Activated CD4-positive, alpha-beta T cell treated with anti-CD3 and anti-CD28 coated beads for 36 hours (primary cell): ENCODE measurements at regions of chr13 and their contacts with region 1.

Region 1: GRCh38 chr13:33931397-33932311 is 113.7 kb downstream of the RFC3 start:
- DNase-seq: no peak
- ATAC-seq: no peak
- H3K4me3 Mint-ChIP-seq: no peak overlapping the region
- H3K27ac Mint-ChIP-seq: no peak overlapping the region
- H3K4me1 Mint-ChIP-seq: no peaks in the 10 kb centered on the region
- H3K27me3 Mint-ChIP-seq: no peaks in the 10 kb centered on the region

Region 2: GRCh38 chr13:33409673-33410510 is 521.8 kb before region 1 on chr13:
- CTCF ChIA-PET with region 1: no interaction called
- POLR2A ChIA-PET with region 1: no interaction called
- intact Hi-C with region 1: no loop called
- DNase-seq: no peak
- ATAC-seq: no peak
- H3K4me3 Mint-ChIP-seq: no peak overlapping the region
- H3K27ac Mint-ChIP-seq: no peak overlapping the region
- H3K4me1 Mint-ChIP-seq: no peaks in the 10 kb centered on the region
- H3K27me3 Mint-ChIP-seq: peaks cover 20% of the 10 kb centered on the region

Region 3: GRCh38 chr13:34361560-34361959 is 429.9 kb after region 1 on chr13:
- CTCF ChIA-PET with region 1: no interaction called
- POLR2A ChIA-PET with region 1: no interaction called
- intact Hi-C with region 1: loop called in 1 of 2 experiments (anchors 10 kb)
- DNase-seq: no peak
- ATAC-seq: no peak
- H3K4me3 Mint-ChIP-seq: no peak overlapping the region
- H3K27ac Mint-ChIP-seq: no peak overlapping the region
- H3K4me1 Mint-ChIP-seq: no peaks in the 10 kb centered on the region
- H3K27me3 Mint-ChIP-seq: no peaks in the 10 kb centered on the region

Region 4: DNA sequence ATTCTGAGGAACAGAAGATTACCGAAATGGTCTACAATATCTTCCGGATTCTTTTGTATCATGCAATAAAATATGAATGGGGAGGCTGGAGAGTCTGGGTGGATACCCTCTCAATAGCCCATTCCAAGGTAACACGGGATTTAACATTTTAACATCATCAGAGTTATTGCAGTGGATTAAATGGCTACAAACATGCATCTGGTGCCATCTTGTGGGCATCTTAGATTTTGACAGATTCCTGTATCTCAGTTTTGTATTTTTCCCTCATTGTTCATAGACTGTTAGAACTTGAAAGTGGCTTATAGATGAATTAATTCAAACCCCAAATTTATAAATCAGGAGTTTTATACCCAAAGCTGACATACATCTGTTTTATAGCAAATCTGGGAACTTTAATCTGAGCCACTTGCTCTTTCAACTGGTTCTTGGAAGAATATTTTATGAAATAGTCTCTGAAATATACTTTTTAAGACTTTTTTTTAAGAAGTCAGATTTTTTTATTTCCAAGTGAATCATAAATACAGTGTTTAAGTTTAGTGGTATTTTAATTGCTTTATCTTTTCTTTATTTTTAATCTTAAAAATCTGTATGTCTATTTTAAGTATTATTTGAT is 1225.6 kb after region 1 on chr13:
- CTCF ChIA-PET with region 1: no interaction called
- POLR2A ChIA-PET with region 1: no interaction called
- intact Hi-C with region 1: loop called (anchors 2 to 10 kb)
- DNase-seq: peak; percentile 47
- ATAC-seq: peak; percentile 39
- H3K4me3 Mint-ChIP-seq: no peak overlapping the region
- H3K27ac Mint-ChIP-seq: no peak overlapping the region
- H3K4me1 Mint-ChIP-seq: peaks cover 2% of the 10 kb centered on the region
- H3K27me3 Mint-ChIP-seq: no peaks in the 10 kb centered on the region

Region 5: DNA sequence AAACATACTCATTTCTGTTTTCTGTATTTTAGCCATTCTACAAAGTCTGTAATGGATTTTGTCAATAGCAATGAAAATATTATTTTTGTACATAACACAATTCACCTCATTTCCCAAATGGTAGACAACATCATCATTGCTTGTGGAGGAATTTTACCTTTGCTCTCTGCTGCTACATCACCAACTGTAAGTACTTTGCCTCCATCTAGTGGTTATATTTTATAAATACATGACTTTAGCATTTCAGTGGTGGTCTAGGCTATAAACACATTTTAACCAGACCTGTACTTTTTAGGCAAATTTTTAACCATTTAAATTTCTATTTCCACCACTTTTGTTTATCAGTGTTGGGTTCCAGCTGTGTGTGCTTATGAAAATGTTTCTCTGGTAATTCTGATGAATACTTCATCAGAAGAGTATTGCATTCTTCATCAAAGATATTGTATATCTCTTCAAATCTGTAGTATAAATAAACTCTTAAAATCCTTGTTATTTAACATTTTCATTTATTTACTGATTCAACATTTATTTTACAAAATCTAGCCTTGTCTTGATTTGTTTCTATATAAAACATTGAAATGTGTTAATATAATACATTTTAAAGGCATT is 1232.8 kb after region 1 on chr13:
- CTCF ChIA-PET with region 1: no interaction called
- POLR2A ChIA-PET with region 1: no interaction called
- intact Hi-C with region 1: loop called in 1 of 2 experiments (anchors 10 kb)
- DNase-seq: no peak
- ATAC-seq: peak; percentile 55
- H3K4me3 Mint-ChIP-seq: no peak overlapping the region
- H3K27ac Mint-ChIP-seq: no peak overlapping the region
- H3K4me1 Mint-ChIP-seq: peaks cover 7% of the 10 kb centered on the region
- H3K27me3 Mint-ChIP-seq: no peaks in the 10 kb centered on the region